OCI-LY7 (cell line): ENCODE measurements at regions of chr18 and their contacts with region 1.

Region 1: GRCh38 chr18:49858309-49859020 is 45.1 kb upstream of the ACAA2 start:
- DNase-seq: peak; percentile 37
- H3K4me3 ChIP-seq: no peak overlapping the region
- H3K27ac ChIP-seq: no peak overlapping the region
- H3K4me1 ChIP-seq: no peaks in the 10 kb centered on the region
- CTCF ChIP-seq: peak; percentile 81

Region 2: DNA sequence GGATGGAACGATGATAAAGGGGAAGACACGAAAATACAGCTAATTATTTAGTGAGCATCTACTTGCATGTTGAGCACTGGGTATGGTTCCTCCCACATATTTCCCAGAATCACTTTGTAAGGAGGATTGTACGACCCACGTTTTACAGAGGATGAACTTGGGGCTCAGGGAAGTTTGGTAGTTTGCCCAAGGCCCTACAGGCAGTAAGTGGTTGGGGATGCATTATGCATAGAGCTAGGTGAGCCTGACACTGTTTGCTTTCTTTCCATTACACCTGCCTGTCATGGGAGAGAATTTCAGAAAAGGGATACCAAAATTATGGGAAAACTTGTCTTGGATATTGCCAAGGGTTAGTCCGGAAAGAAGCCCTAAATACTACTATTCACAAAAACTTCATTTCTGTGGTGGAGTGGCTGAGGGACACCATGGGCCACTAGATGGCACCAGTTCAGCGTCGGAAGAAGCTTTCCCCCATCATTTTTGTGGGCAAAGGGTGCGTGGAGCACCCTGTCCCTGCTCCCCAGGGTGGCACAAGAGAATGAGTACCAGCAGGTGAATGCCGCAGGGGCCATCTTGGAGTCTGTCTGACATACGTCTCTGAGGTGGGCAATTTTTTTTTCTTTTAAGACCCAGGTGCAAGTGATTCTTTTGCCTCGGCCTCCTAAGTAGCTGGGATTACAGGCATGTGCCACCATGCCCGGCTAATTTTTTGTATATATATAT is 347.9 kb before region 1 on chr18:
- CTCF ChIA-PET with region 1: no interaction called
- POLR2A ChIA-PET with region 1: no interaction called
- intact Hi-C with region 1: loop called (anchors 1 kb)
- DNase-seq: peak; percentile 48
- H3K4me3 ChIP-seq: no peak overlapping the region
- H3K27ac ChIP-seq: no peak overlapping the region
- H3K4me1 ChIP-seq: no peaks in the 10 kb centered on the region
- CTCF ChIP-seq: peak; percentile 80

Region 3: DNA sequence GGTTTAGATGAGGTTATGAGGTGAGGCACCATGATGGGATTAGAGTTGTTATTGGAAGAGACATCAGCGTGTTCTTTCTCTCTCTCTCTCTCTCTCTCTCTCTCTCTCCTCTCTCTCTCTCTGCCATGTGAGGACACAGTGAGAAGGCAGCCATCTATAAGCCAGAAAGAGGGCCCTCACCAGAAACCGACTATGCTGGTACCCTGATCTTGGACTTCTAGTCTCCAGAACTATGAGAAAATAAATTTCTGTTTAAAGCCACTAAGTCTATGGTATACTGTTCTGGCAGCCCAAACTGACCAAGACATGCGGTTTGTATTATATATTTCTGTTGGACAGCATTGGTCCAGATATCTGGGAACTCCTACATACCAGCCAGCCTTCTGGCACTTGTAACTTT is 300.1 kb before region 1 on chr18:
- CTCF ChIA-PET with region 1: interaction called, 3 read pairs
- POLR2A ChIA-PET with region 1: no interaction called
- intact Hi-C with region 1: loop called (anchors 2 kb)
- DNase-seq: no peak
- H3K4me3 ChIP-seq: no peak overlapping the region
- H3K27ac ChIP-seq: no peak overlapping the region
- H3K4me1 ChIP-seq: no peaks in the 10 kb centered on the region
- CTCF ChIP-seq: no peak